Adrenal gland (tissue), 19 donors: ENCODE measurements at regions of chr5 and their contacts with region 1.

Region 1: GRCh38 chr5:140157032-140157803 is 17.8 kb upstream of the CYSTM1 start:
- DNase-seq: peak; percentile 88 to 96 (median 91)
- H3K4me3 ChIP-seq: peak overlapping the region in 2 of 4 donors; percentile 22 to 56
- H3K27ac ChIP-seq: peak overlapping the region in 4 of 5 donors; percentile 29 to 83 (median 53)
- H3K4me1 ChIP-seq: peaks cover 0 to 8% of the 10 kb centered on the region in 2 donors
- H3K27me3 ChIP-seq: no peaks in the 10 kb centered on the region
- CTCF ChIP-seq: peak; percentile 82 to 98 (median 94)
- POLR2A ChIP-seq: no peak

Region 2: GRCh38 chr5:139968547-139969261 is 188.5 kb before region 1 on chr5:
- intact Hi-C with region 1: loop called in 1 of 2 experiments (anchors 10 kb)
- DNase-seq: peak; percentile 79 to 96 (median 91)
- H3K4me3 ChIP-seq: no peak overlapping the region
- H3K27ac ChIP-seq: no peak overlapping the region
- H3K4me1 ChIP-seq: peaks cover 0 to 19% of the 10 kb centered on the region in 2 donors
- H3K27me3 ChIP-seq: no peaks in the 10 kb centered on the region
- CTCF ChIP-seq: peak; percentile 100
- POLR2A ChIP-seq: no peak

Region 3: GRCh38 chr5:140084541-140084940 is 72.7 kb before region 1 on chr5:
- intact Hi-C with region 1: no loop called
- DNase-seq: peak; percentile 20 to 63 (median 34)
- H3K4me3 ChIP-seq: no peak overlapping the region
- H3K27ac ChIP-seq: no peak overlapping the region
- H3K4me1 ChIP-seq: no peaks in the 10 kb centered on the region
- H3K27me3 ChIP-seq: no peaks in the 10 kb centered on the region
- CTCF ChIP-seq: no peak
- POLR2A ChIP-seq: no peak

Region 4: DNA sequence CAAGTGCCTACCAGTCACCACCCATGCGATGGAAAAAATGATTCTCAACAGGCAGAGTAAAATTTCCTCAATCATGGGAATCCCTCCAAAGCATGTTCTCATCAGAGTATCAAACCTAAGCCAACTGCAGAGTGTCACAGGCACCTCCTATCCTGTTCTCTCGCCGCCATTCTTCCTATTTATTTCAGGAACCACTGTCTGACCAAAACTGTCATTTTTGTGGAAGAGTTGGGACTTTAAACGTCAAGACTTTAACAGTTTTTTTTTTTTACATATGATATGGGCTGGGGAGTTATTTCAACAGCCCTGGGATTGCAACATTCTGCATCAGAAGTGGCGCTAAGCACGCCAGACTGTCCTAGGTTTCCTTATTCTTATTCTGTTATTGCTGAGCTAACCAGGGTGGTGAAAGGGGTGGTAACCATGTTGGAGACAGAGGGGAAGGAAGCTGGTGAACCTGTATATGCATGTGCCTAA is 116.2 kb after region 1 on chr5:
- intact Hi-C with region 1: no loop called
- DNase-seq: peak in 4 of 7 donors; percentile 33 to 53 (median 46)
- H3K4me3 ChIP-seq: no peak overlapping the region
- H3K27ac ChIP-seq: peak overlapping the region in 2 of 5 donors; percentile 35 to 64
- H3K4me1 ChIP-seq: peaks cover 0 to 3% of the 10 kb centered on the region in 2 donors
- H3K27me3 ChIP-seq: no peaks in the 10 kb centered on the region
- CTCF ChIP-seq: no peak
- POLR2A ChIP-seq: no peak